ENCODE measurements at regions of chr2 and their contacts with region 1.

Region 1: DNA sequence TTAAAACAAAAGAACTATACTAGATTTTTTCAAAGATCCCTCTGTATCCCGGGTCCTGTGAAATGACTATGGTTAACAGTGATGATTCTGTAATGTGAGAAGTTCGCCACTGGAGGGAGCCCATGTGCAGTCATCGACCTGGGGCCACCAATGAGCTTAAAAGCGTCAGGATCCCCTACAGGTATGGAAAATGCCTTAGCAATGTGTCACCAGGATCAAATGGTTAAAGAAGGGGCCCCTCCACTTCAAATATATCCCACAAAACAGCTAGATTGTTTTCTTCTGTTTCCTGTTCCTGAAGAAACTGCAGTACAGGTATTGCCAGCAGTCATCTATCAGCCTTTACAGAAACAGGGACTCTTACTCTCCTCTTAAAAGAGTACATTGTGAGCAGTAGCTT is 15.3 kb downstream of the CHRNA1 start:
- DNase-seq: peak; percentile 85
- ATAC-seq: peak; percentile 33
- H3K4me3 Mint-ChIP-seq: no peak overlapping the region
- H3K27ac Mint-ChIP-seq: no peak overlapping the region
- H3K4me1 Mint-ChIP-seq: peaks cover 39% of the 10 kb centered on the region
- H3K27me3 Mint-ChIP-seq: peaks cover 2% of the 10 kb centered on the region

Region 2: DNA sequence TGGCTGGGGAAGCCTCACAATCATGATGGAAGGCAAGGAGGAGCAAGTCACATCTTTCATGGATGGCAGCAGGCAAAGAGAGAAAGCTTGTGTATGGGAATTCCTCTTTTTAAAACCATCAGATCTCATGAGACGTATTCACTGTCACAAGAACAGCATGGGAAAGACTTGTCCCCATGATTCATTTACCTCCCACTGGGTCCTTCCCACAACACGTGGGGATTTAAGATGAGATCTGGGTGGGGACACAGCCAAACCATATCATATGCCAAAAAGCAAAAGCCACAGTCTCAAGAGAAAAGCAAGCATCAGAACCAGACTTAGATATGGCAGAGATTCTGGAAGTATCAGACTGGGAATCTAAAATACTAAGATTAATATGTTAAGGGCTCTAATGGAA is 383.4 kb before region 1 on chr2:
- CTCF ChIA-PET with region 1: no interaction called
- POLR2A ChIA-PET with region 1: no interaction called
- intact Hi-C with region 1: no loop called
- DNase-seq: no peak
- ATAC-seq: no peak
- H3K4me3 Mint-ChIP-seq: no peak overlapping the region
- H3K27ac Mint-ChIP-seq: no peak overlapping the region
- H3K4me1 Mint-ChIP-seq: no peaks in the 10 kb centered on the region
- H3K27me3 Mint-ChIP-seq: no peaks in the 10 kb centered on the region

Region 3: DNA sequence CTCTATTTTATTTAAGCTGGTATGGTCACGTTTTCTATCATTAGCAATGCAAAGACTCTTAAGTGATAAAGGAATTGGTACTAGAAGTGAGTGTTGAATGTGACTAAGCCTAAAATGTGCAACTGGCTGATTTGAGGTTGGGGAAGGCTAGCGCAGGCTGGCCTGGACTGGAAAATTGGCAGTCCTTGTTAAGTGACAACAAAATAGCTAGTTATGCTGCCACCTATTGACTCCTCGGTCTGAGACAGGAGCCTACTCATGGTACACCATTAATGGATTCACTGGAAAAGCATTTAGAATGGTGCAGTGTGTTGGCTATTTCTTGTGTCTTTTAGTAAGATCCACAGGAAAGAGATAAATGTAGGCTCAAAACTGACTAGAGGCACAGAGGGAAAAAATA is 145.7 kb before region 1 on chr2:
- CTCF ChIA-PET with region 1: no interaction called
- POLR2A ChIA-PET with region 1: no interaction called
- intact Hi-C with region 1: loop called in 1 of 2 experiments (anchors 5 kb)
- DNase-seq: peak; percentile 78
- ATAC-seq: peak; percentile 63
- H3K4me3 Mint-ChIP-seq: no peak overlapping the region
- H3K27ac Mint-ChIP-seq: peak overlapping the region; percentile 84
- H3K4me1 Mint-ChIP-seq: peaks cover 91% of the 10 kb centered on the region
- H3K27me3 Mint-ChIP-seq: no peaks in the 10 kb centered on the region

Region 4: GRCh38 chr2:174729797-174730697 is 18.9 kb before region 1 on chr2:
- CTCF ChIA-PET with region 1: interaction called, 10 read pairs
- POLR2A ChIA-PET with region 1: no interaction called
- intact Hi-C with region 1: no loop called
- DNase-seq: peak; percentile 71
- ATAC-seq: peak; percentile 90
- H3K4me3 Mint-ChIP-seq: peak overlapping the region; percentile 72
- H3K27ac Mint-ChIP-seq: peak overlapping the region; percentile 53
- H3K4me1 Mint-ChIP-seq: peaks cover 12% of the 10 kb centered on the region
- H3K27me3 Mint-ChIP-seq: peaks cover 6% of the 10 kb centered on the region

Region 5: GRCh38 chr2:174771631-174772471 is 22.9 kb after region 1 on chr2:
- CTCF ChIA-PET with region 1: interaction called, 22 read pairs
- POLR2A ChIA-PET with region 1: interaction called, 3 read pairs
- intact Hi-C with region 1: no loop called
- DNase-seq: peak; percentile 77
- ATAC-seq: peak; percentile 89
- H3K4me3 Mint-ChIP-seq: no peak overlapping the region
- H3K27ac Mint-ChIP-seq: no peak overlapping the region
- H3K4me1 Mint-ChIP-seq: peaks cover 17% of the 10 kb centered on the region
- H3K27me3 Mint-ChIP-seq: no peaks in the 10 kb centered on the region

Region 6: GRCh38 chr2:174835797-174836255 is 86.9 kb after region 1 on chr2:
- CTCF ChIA-PET with region 1: no interaction called
- POLR2A ChIA-PET with region 1: interaction called, 5 read pairs
- intact Hi-C with region 1: loop called (anchors 1 to 5 kb)
- DNase-seq: peak; percentile 68
- ATAC-seq: peak; percentile 95
- H3K4me3 Mint-ChIP-seq: peak overlapping the region; percentile 41
- H3K27ac Mint-ChIP-seq: peak overlapping the region; percentile 96
- H3K4me1 Mint-ChIP-seq: peaks cover 42% of the 10 kb centered on the region
- H3K27me3 Mint-ChIP-seq: peaks cover 2% of the 10 kb centered on the region

Region 7: DNA sequence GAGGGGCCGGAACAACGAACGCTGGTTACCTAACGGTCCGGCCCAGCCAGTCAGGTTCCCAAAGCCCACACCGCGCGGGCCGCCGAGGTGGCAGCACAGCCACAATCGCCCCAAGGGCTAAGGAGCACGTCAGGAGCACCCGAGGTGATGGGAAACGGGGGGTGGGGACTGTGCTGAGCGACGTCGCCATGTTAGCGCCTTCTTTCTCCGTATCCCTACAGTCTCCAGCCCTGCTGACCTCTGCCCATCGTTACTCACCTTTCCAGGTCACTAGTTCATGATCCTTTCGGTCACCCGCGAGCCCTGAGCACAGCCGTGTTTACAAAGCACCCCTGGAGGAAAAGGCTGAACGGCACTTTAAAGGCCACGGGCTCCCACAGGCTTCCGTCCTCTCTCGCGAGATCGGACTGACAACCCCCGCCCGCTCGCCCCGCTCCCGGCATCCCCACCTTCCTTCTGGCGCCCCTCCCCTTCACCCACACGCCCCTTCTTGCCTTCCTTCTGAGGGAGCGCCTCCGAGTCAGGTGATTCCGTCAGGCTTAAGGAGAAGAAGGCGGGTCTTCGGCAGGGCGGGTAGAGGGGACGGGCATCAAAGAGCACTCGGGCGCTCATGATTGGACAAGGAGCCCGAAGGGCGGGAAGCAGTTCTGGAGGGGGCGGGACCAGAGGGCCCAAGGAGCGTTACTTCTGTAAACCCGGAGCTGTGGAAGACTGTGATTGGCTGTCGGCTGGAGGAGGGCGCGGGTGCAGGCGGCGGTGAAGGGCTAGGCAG is 419.0 kb after region 1 on chr2 and contains the start of gene ATF2:
- CTCF ChIA-PET with region 1: no interaction called
- POLR2A ChIA-PET with region 1: no interaction called
- intact Hi-C with region 1: loop called (anchors 2 to 5 kb)
- DNase-seq: peak; percentile 98
- ATAC-seq: peak; percentile 95
- H3K4me3 Mint-ChIP-seq: peak within 1 kb of the TSS; percentile 95
- H3K27ac Mint-ChIP-seq: peak within 1 kb of the TSS; percentile 99
- H3K4me1 Mint-ChIP-seq: peaks cover 35% of the 10 kb centered on the region
- H3K27me3 Mint-ChIP-seq: no peaks in the 10 kb centered on the region
- total RNA-seq, gene ATF2: 52.2 to 67.5 TPM

Measured in activated CD4-positive, alpha-beta T cell treated with anti-CD3 and anti-CD28 coated beads for 36 hours (primary cell).